HEK293 (cell line): ENCODE measurements at regions of chr6 and their contacts with region 1.

Region 1: DNA sequence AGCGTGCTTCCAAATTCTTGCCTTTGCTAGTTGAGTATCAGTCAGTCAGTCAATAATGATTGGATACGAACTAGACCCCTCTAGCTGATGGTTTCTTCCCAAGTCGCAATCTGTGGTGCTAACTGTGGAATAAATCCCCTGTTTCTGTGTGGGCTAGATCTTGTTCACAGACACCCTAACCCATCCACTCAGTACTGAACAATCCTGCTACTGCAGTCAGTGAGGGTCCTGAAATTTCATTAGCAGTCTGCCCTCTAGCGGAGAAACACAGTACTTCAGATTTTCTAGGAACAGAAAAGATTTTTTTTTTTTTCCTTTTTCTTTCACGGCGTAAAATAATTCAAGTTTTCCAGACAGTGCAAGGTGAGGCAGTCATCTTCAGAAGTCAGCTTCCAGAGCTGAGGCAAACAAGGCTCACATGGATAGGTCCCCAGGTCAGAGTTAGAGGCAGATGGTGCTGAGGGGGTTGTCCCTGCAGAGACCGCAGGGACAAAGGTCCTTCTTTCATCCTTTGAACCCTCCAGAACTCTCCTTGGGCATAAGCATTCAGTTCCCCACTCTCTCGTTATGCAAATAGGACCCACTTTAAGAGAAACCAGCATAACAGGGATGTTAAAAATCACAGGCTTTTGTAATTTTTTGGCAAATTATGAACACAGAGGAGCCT is 119.6 kb downstream of the SCML4 start:
- H3K4me3 ChIP-seq: no peak overlapping the region
- H3K27ac ChIP-seq: no peak overlapping the region
- H3K4me1 ChIP-seq: no peaks in the 10 kb centered on the region
- CTCF ChIP-seq: 0 out of 2 replicates have a peak, but pooled peaks have one; percentile 21

Region 2: GRCh38 chr6:107716688-107717089 is 12.2 kb after region 1 on chr6:
- CTCF ChIA-PET with region 1: interaction called, 30 read pairs
- POLR2A ChIA-PET with region 1: no interaction called
- H3K4me3 ChIP-seq: no peak overlapping the region
- H3K27ac ChIP-seq: no peak overlapping the region
- H3K4me1 ChIP-seq: no peaks in the 10 kb centered on the region
- CTCF ChIP-seq: no peak

Region 3: DNA sequence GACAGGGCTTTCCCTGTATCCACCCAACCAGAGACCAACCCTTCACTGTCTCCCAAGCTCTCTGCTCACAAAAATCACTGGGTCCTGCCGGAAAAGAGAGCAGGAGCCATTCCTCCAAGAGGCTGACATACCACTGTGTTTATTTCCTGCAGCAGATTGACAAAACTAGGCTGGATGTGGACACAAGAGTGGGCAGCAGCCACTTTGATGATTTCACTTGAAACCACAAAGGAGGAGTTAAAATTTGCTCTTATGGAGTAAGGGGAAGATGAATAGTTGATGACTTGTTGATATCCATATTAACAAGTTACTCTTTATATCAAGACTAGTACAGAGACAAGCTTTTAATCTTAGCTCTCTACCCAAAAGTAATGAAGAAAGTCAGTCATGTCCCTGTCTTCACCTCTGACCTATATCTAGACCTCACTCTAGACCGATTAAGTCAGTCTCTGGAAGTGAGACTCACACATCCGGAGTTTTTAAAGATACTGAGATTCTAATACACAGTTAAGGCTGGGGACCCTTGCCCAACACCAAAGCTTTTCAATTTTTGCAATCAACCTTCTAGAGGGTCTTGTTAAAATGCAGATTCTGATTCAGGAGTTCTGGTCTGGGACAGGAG is 45.8 kb after region 1 on chr6:
- CTCF ChIA-PET with region 1: interaction called, 12 read pairs
- POLR2A ChIA-PET with region 1: no interaction called
- H3K4me3 ChIP-seq: no peak overlapping the region
- H3K27ac ChIP-seq: no peak overlapping the region
- H3K4me1 ChIP-seq: no peaks in the 10 kb centered on the region
- CTCF ChIP-seq: no peak